ENCODE measurements at regions of chr9 and their contacts with region 1.

Region 1: DNA sequence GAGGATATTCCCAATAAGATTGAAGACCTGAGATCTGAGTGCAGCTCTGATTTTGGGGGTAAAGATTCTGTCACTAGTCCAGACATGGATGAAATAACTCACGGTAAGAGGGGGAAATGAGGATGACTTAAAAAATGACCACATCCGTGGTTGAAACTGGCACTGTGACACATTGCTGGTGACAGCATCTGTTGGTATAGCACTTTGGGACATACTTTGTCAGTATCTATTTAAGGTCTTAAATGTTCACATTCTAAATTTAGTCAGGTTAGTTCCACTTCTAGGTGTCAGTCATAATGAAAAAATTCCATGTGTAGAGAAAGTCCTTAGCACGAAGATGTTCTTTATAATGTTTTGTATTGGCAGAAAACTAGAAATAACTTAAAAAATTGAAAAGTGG is 70.9 kb downstream of the GAPVD1 start:
- DNase-seq: no peak
- H3K4me3 ChIP-seq: no peak overlapping the region
- H3K27ac ChIP-seq: no peak overlapping the region
- H3K4me1 ChIP-seq: peaks cover 17% of the 10 kb centered on the region
- H3K27me3 ChIP-seq: no peaks in the 10 kb centered on the region
- CTCF ChIP-seq: no peak

Region 2: GRCh38 chr9:125296833-125297372 is 35.6 kb before region 1 on chr9:
- CTCF ChIA-PET with region 1: interaction called, 5 read pairs
- POLR2A ChIA-PET with region 1: no interaction called
- intact Hi-C with region 1: loop called (anchors 1 kb)
- DNase-seq: peak; percentile 44 to 97
- H3K4me3 ChIP-seq: no peak overlapping the region
- H3K27ac ChIP-seq: peak overlapping the region; percentile 63
- H3K4me1 ChIP-seq: peaks cover 27% of the 10 kb centered on the region
- H3K27me3 ChIP-seq: no peaks in the 10 kb centered on the region
- CTCF ChIP-seq: no peak

Region 3: DNA sequence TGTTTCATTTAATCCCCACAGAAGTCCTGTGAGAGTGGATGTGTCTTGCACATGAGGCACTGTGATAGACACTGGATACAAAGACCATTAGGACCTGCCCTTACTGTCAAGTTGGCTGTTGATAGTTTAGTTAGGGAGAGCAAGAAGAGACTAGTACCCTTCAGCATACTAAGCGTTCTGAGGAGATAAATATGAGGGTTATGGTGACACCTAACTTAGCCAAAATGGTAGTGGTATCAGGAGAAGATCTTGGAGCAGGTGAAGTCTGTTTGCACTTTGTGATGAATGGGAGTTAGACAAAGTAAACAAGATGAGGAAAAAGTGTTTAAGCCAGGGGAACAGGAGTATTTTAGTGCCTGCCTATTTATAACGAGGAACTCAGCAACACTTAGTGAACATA is 23.8 kb before region 1 on chr9:
- CTCF ChIA-PET with region 1: no interaction called
- POLR2A ChIA-PET with region 1: interaction called, 20 read pairs
- intact Hi-C with region 1: no loop called
- DNase-seq: no peak
- H3K4me3 ChIP-seq: no peak overlapping the region
- H3K27ac ChIP-seq: no peak overlapping the region
- H3K4me1 ChIP-seq: no peaks in the 10 kb centered on the region
- H3K27me3 ChIP-seq: no peaks in the 10 kb centered on the region
- CTCF ChIP-seq: no peak

Region 4: GRCh38 chr9:125356032-125356431 is 23.5 kb after region 1 on chr9:
- CTCF ChIA-PET with region 1: no interaction called
- POLR2A ChIA-PET with region 1: interaction called, 14 read pairs
- intact Hi-C with region 1: no loop called
- DNase-seq: no peak
- H3K4me3 ChIP-seq: no peak overlapping the region
- H3K27ac ChIP-seq: no peak overlapping the region
- H3K4me1 ChIP-seq: no peaks in the 10 kb centered on the region
- H3K27me3 ChIP-seq: no peaks in the 10 kb centered on the region
- CTCF ChIP-seq: no peak

Region 5: DNA sequence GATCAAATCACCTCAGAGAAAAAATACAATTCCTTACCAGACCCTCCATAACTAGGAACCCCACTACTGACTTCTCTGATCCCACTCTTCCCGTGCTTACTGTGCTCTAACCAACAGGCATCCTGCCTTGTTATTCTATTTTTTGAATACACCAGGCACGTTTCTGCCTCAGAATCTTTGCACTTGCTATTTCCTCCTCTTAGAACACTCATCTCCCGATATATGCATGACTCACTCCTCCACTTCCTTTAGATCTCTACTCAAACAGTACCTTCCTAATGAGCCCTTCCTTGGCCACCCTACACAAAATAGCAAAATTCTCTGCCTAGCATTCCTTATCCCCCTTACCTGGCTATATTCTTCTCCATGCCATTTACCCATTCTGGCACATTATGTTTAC is 330.6 kb after region 1 on chr9:
- CTCF ChIA-PET with region 1: no interaction called
- POLR2A ChIA-PET with region 1: no interaction called
- intact Hi-C with region 1: no loop called
- DNase-seq: peak in 1 of 2 experiments; percentile 79
- H3K4me3 ChIP-seq: no peak overlapping the region
- H3K27ac ChIP-seq: peak overlapping the region; percentile 57
- H3K4me1 ChIP-seq: peaks cover 11% of the 10 kb centered on the region; the same call in 1 of the 2 replicates
- H3K27me3 ChIP-seq: no peaks in the 10 kb centered on the region
- CTCF ChIP-seq: no peak

Measured in PC-9 (cell line).